Psoas muscle (tissue), 8 donors: ENCODE measurements at regions of chr22 and their contacts with region 1.

Region 1: DNA sequence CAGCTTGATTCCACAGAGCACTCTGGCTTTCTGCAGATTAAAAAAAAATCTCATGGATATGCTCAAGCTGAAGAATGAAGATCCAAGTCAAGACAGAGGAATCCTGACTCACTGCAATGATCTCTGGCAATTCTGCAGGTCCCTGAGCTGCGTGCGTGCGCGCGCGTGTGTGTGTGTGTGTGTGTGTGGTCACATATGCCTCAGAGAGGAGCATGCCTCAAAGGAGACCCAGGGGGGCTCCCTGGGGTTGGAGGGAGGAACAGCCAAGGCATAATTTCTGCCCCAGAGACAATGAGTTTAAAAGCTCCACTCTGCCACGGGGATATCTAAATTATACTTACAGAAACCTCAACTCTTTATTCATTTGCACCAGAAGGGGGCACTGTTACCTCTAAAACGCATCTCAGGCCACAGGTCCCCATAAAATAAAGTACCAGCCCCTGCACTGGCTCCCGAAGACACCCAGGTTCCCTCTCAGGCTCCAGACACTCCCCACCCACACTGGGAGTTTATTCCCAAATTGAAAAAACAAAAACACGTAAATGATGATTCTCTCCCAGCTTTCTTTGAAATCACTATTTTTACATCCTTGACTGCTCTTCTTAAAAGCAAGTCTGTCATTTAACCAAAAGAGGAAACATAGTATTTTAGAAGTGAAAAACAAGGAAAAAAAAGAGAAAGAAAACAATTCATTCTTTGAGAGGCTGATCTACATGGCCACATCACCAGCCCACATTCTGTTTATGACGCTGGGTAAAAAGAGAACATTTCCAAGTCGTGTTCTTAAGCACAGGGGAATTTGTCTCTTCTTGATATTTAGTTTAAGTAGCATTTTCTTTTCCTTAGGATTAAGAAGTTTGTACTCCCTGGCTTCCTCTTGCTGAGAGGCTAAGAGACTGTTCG is 401.0 kb downstream of the LARGE1 start:
- DNase-seq: peak in 1 of 2 donors; percentile 17
- ATAC-seq: peak; percentile 56 to 80 (median 60)
- H3K4me3 ChIP-seq: no peak overlapping the region
- H3K27ac ChIP-seq: no peak overlapping the region
- H3K4me1 ChIP-seq: peaks cover 4% of the 10 kb centered on the region
- H3K27me3 ChIP-seq: no peaks in the 10 kb centered on the region
- CTCF ChIP-seq: peak; percentile 66

Region 2: DNA sequence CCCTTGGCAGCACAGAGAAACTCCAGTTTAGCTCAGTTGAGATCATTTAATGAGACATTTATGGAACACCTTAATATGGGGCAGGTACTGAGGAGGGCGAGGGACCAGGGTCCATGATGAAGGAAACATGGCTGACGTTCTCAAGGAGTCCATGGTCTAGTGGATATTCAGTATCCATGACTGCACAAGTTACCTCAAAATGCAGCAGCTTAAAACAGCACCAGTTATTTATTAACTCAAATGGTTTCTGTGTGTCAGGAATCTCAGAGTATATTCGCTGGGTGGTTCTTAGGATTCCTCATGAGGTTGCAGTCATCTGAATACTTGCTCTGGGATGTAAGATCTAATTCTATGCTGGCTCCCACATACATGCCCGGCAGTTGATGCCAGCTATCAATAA is 54.2 kb after region 1 on chr22:
- intact Hi-C with region 1: loop called (anchors 2 to 5 kb)
- DNase-seq: no peak
- ATAC-seq: no peak
- H3K4me3 ChIP-seq: no peak overlapping the region
- H3K27ac ChIP-seq: no peak overlapping the region
- H3K4me1 ChIP-seq: peaks cover 5% of the 10 kb centered on the region
- H3K27me3 ChIP-seq: no peaks in the 10 kb centered on the region
- CTCF ChIP-seq: no peak

Region 3: DNA sequence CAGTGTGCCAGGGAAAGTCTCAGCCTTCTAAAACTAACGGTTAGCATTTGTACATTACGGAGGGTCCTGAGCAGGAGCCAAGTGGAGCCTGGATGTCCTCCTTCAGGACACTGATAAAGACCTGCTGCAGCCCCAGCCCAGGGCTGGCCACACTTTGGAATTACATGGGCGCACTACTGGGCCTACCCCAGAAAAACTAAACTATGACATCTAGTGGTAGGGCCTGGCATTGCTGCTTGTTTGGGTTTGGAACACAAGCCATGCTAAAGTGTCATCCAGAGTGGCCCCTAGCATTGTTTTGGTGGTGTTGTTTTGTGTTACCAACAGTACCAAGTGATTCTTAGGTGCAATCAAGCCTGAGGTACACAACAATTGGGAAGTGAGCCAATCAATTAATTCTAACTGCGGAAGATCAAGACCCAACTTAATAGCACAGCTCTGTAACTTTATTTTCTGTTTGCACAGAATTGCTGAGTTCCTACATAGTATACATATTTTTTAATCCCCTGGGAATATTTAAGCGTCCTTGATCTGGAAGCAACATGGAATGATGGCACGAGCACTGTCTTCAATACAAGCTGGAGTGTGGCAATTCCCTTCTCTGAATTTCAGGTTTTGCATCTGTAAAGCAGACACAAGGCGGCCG is 60.2 kb after region 1 on chr22:
- intact Hi-C with region 1: loop called (anchors 2 to 5 kb)
- DNase-seq: peak; percentile 29 to 64
- ATAC-seq: peak; percentile 89 to 92 (median 90)
- H3K4me3 ChIP-seq: no peak overlapping the region
- H3K27ac ChIP-seq: no peak overlapping the region
- H3K4me1 ChIP-seq: no peaks in the 10 kb centered on the region
- H3K27me3 ChIP-seq: no peaks in the 10 kb centered on the region
- CTCF ChIP-seq: peak; percentile 95

Region 4: DNA sequence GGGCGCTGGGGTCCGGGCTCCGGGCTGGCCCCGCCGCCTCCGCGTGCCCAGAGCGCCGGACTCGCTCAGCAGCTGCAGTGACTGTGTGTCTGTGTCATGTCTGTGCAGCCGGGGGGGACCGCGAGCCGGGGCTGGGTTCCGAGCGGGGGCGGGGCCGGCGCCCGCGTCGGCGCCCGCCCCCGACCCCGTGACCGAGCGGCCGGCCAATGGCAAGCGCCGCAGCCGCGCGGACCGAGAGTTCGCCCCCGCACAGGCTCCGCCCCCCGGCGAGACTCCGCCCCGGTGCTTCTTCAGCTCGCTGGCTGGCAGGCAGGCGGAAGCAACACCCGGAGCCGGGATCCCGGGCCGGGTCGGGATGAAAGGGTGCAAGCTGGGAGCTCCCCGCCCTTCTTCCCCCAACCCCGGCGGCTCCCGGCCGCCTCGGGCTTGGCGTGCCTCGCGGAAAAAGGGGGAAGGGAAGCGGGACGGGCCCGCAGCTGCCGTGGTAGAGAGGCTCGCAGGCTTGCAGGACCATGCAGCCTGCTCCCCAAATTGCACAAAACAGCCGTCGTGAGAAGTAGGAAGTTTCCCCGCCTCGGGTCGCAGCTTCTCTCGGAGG is 401.7 kb after region 1 on chr22:
- intact Hi-C with region 1: loop called (anchors 2 to 10 kb)
- DNase-seq: peak; percentile 99 to 100
- ATAC-seq: peak; percentile 90 to 94 (median 91)
- H3K4me3 ChIP-seq: peak overlapping the region; percentile 69
- H3K27ac ChIP-seq: peak overlapping the region; percentile 42
- H3K4me1 ChIP-seq: peaks cover 37% of the 10 kb centered on the region
- H3K27me3 ChIP-seq: no peaks in the 10 kb centered on the region
- CTCF ChIP-seq: no peak

Region 5: DNA sequence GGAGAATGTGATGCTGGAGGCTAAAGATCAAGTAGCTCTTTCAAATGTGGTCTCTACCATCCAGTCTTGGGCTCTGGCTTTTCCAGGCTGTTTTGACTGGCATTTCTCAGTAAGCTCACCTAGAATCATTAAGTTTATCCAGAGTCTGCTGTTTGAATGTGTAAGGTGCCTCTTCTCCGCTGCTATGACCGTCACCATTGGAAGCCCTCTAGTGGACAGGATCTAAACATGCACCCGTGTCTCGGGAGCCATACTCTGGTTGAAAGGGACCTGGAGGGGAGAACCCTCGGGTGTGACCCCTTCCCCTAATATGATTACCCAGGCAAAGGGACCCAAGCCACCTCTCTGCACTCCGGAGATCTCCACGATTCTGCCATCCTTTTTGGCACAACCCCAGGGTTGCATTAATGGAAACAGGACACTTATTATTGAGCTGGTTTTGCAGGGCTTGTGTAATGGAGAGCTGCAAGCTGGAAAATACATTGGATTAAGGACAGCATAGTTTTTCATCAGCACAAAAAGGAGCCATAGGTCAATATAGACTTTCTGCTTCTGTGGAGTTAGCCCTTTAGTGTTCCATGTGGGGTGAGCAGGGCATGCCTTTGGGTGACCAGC is 592.0 kb after region 1 on chr22:
- intact Hi-C with region 1: loop called in 1 of 2 experiments (anchors 5 kb)
- DNase-seq: no peak
- ATAC-seq: peak; percentile 51 to 75 (median 66)
- H3K4me3 ChIP-seq: no peak overlapping the region
- H3K27ac ChIP-seq: no peak overlapping the region
- H3K4me1 ChIP-seq: no peaks in the 10 kb centered on the region
- H3K27me3 ChIP-seq: peaks cover 0 to 3% (median 2%) of the 10 kb centered on the region in 3 donors
- CTCF ChIP-seq: peak; percentile 66